ENCODE measurements at regions of chr10 and their contacts with region 1.

Region 1: GRCh38 chr10:102072673-102073527 is 7.8 kb downstream of the HPS6 start:
- DNase-seq: peak; percentile 66 to 81 (median 73)
- ATAC-seq: peak; percentile 95 to 99 (median 96)
- H3K4me3 ChIP-seq: no peak overlapping the region
- H3K27ac ChIP-seq: no peak overlapping the region
- H3K4me1 ChIP-seq: no peaks in the 10 kb centered on the region
- H3K27me3 ChIP-seq: no peaks in the 10 kb centered on the region
- CTCF ChIP-seq: peak; percentile 80 to 96 (median 91)
- POLR2A ChIP-seq: no peak

Region 2: GRCh38 chr10:101779544-101780186 is 293.2 kb before region 1 on chr10:
- intact Hi-C with region 1: no loop called
- DNase-seq: peak; percentile 82 to 87 (median 87)
- ATAC-seq: peak; percentile 81 to 89 (median 82)
- H3K4me3 ChIP-seq: peak overlapping the region; percentile 24 to 40 (median 38)
- H3K27ac ChIP-seq: no peak overlapping the region
- H3K4me1 ChIP-seq: peaks cover 0 to 32% (median 9%) of the 10 kb centered on the region in 4 donors
- H3K27me3 ChIP-seq: peaks cover 0 to 7% of the 10 kb centered on the region in 2 donors
- CTCF ChIP-seq: peak; percentile 64 to 94 (median 94)
- POLR2A ChIP-seq: no peak

Region 3: GRCh38 chr10:101840741-101841453 is 232.0 kb before region 1 on chr10:
- intact Hi-C with region 1: loop called in 1 of 2 experiments (anchors 10 kb)
- DNase-seq: peak; percentile 81 to 85 (median 82)
- ATAC-seq: peak; percentile 83 to 87 (median 86)
- H3K4me3 ChIP-seq: peak overlapping the region; percentile 9 to 38 (median 27)
- H3K27ac ChIP-seq: no peak overlapping the region
- H3K4me1 ChIP-seq: peaks cover 0 to 9% (median 2%) of the 10 kb centered on the region in 4 donors
- H3K27me3 ChIP-seq: no peaks in the 10 kb centered on the region
- CTCF ChIP-seq: peak; percentile 87 to 96 (median 95)
- POLR2A ChIP-seq: no peak

Measured in right lobe of liver (tissue), 6 donors.